ENCODE measurements at regions of chr14 and their contacts with region 1.

Region 1: GRCh38 chr14:23209651-23210423 is 26.4 kb upstream of the SLC7A8 start:
- DNase-seq: no peak
- H3K4me3 ChIP-seq: no peak overlapping the region
- H3K27ac ChIP-seq: no peak overlapping the region
- H3K4me1 ChIP-seq: no peaks in the 10 kb centered on the region
- H3K27me3 ChIP-seq: no peaks in the 10 kb centered on the region
- CTCF ChIP-seq: no peak
- POLR2A ChIP-seq: no peak

Region 2: DNA sequence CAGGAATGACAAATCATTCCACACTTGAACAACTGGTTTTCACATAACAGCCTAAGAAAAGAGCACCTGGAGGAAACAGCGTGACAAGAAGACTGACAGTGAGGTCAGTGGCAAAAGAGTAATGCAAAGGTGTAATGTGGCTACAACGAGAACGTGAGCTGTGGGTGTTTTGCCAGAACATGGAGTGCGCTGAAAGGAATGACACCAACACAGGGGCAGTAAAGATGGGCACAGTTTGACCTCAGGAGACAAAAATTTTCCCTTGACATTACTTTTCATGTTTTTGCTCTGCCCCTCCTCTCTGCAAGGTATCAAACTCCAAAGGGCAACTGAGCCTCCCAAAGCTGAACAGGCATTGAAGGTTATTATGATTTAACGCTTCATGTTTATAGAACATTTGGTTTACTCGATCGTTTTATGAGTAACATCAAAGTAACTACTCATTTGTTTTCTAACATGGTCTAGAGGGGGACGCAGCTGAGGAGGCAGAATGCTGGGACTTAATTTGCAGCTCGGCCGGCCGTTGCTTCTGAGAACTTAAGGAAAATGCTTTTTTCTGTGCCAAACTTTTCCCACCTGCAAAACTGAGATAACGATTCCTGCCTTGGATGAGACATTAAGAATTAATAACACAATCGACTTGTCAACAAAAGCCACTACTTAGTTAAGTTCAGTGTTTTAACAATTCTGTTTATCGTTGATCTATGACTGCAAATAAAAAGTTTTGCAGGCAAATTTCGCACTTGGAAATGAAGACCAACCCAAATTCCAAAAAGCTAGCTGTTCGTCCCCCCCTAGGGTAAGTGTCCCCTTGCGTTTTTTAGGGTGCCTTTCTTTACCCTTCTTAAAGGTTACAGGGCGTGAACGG is 253.9 kb before region 1 on chr14:
- intact Hi-C with region 1: loop called (anchors 5 kb)
- DNase-seq: no peak
- H3K4me3 ChIP-seq: peak overlapping the region; percentile 59 to 74 (median 72)
- H3K27ac ChIP-seq: peak overlapping the region; percentile 95
- H3K4me1 ChIP-seq: no peaks in the 10 kb centered on the region
- H3K27me3 ChIP-seq: no peaks in the 10 kb centered on the region
- CTCF ChIP-seq: no peak
- POLR2A ChIP-seq: no peak

Region 3: GRCh38 chr14:23275412-23275811 is 65.6 kb after region 1 on chr14:
- intact Hi-C with region 1: loop called (anchors 2 kb)
- DNase-seq: no peak
- H3K4me3 ChIP-seq: no peak overlapping the region
- H3K27ac ChIP-seq: no peak overlapping the region
- H3K4me1 ChIP-seq: no peaks in the 10 kb centered on the region
- H3K27me3 ChIP-seq: no peaks in the 10 kb centered on the region
- CTCF ChIP-seq: no peak
- POLR2A ChIP-seq: no peak